Aorta (tissue), 5 donors: ENCODE measurements at regions of chr1 and their contacts with region 1.

Region 1: GRCh38 chr1:198157241-198157846 is 546 bp downstream of the NEK7 start:
- DNase-seq: peak; percentile 93 to 95
- ATAC-seq: peak; percentile 87
- H3K4me3 ChIP-seq: peak overlapping the region; percentile 89 to 97
- H3K27ac ChIP-seq: peak overlapping the region; percentile 89 to 98
- H3K4me1 ChIP-seq: peaks cover 0 to 2% of the 10 kb centered on the region in 2 donors
- H3K27me3 ChIP-seq: no peaks in the 10 kb centered on the region

Region 2: DNA sequence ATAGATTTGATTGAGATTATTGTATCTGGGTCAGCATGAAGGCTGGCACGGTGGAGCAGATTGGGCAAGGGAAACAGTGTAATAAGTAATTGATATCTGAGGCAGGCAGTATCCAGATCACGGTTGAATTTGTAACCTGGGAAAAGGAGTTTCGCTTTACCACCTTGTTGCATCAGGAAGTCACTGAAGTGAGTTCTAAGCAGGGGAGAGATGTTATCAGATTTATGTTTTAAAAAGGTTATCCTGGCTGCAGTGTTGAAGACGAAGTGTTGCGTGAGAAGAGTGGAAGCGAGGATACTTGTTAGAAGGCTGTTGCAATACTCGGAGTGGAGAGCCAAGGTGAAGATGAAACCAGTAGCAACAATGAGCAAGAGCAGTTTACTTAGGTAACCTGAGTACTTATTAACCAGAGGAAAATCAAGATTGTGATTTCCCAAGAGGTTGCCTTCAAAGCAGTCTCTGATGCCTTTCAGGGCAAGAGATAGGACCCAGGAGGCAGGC is 162.4 kb before region 1 on chr1:
- intact Hi-C with region 1: no loop called
- DNase-seq: no peak
- ATAC-seq: no peak
- H3K4me3 ChIP-seq: no peak overlapping the region
- H3K27ac ChIP-seq: no peak overlapping the region
- H3K4me1 ChIP-seq: no peaks in the 10 kb centered on the region
- H3K27me3 ChIP-seq: peaks cover 0 to 2% of the 10 kb centered on the region in 2 donors

Region 3: GRCh38 chr1:198040880-198041279 is 116.5 kb before region 1 on chr1:
- intact Hi-C with region 1: no loop called
- DNase-seq: no peak
- ATAC-seq: no peak
- H3K4me3 ChIP-seq: no peak overlapping the region
- H3K27ac ChIP-seq: no peak overlapping the region
- H3K4me1 ChIP-seq: no peaks in the 10 kb centered on the region
- H3K27me3 ChIP-seq: no peaks in the 10 kb centered on the region

Region 4: GRCh38 chr1:198118134-198118533 is 39.2 kb before region 1 on chr1:
- intact Hi-C with region 1: loop called (anchors 2 to 5 kb)
- DNase-seq: peak; percentile 85 to 87
- ATAC-seq: peak; percentile 91
- H3K4me3 ChIP-seq: no peak overlapping the region
- H3K27ac ChIP-seq: peak overlapping the region in 1 of 2 donors; percentile 40
- H3K4me1 ChIP-seq: no peaks in the 10 kb centered on the region
- H3K27me3 ChIP-seq: no peaks in the 10 kb centered on the region

Region 5: DNA sequence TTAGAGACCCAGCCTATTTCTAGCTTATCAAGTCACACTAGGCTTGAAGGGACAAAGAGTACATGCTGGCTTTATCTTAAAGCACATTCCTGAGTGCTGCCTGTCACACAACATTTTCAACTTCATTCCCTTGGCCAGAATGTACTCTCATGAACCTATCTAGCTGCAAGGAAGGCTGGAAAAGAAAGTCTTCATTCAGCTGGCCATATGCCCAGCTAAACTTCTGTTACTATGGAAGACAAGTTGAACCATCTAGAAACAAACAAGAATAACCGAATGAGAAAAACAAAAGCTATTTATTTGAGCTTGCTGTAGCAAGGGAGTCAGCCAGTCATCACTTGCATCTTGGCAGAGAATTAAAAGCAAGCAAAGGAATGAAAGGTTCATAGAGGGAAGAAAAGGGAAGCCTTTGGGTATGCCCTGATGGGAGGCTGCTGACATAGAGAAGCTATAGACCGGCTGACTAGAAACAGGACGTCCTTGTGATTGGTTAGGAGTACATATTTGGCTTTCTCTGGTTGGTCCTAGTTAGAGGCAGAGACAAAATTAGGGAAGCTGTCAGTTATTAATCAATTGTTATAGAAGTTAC is 107.8 kb after region 1 on chr1:
- intact Hi-C with region 1: loop called in 1 of 2 experiments (anchors 10 kb)
- DNase-seq: no peak
- ATAC-seq: no peak
- H3K4me3 ChIP-seq: no peak overlapping the region
- H3K27ac ChIP-seq: no peak overlapping the region
- H3K4me1 ChIP-seq: peaks cover 0 to 8% of the 10 kb centered on the region in 2 donors
- H3K27me3 ChIP-seq: no peaks in the 10 kb centered on the region